ENCODE measurements at regions of chr1 and their contacts with region 1.

Region 1: DNA sequence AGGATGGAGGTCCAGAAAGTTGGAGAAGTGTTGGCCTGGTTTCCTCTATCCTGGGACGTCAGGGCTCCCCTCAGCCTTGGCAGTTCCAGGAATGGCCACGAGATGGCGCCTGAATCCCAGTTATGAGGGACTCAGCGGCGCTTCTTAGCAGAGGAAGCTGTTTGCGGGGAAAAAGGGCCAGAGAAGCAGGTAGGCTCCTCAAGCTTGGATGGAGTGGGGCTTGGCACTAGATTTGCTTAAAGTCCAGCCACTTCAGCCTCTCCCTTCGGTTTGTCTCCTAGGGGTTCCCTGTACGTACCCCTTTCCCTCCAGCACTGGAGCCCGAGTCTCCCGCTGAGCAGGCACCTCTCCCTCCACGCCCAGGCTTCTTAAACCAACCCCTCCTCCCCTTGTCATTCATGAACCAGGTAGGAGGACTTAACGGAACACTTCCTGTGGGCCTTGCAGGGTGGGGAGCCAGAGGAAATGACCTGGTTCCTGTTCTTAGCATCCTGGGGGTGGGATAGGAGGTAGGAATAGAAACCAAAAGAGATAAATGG is 32.0 kb upstream of the TENT5B start:
- DNase-seq: peak; percentile 66 to 76
- ATAC-seq: peak; percentile 88 to 94
- H3K4me3 ChIP-seq: no peak overlapping the region
- H3K27ac ChIP-seq: peak overlapping the region in 1 of 2 experiments; percentile 29; a peak in 3 of 6 replicates
- H3K4me1 ChIP-seq: 0 out of 3 replicates have a peak, but pooled peaks cover 4% of the 10 kb centered on the region
- CTCF ChIP-seq: peak; percentile 80
- EP300 ChIP-seq: no peak
- POLR2A ChIP-seq: no peak
- RAD21 ChIP-seq: peak; percentile 90 to 92

Region 2: DNA sequence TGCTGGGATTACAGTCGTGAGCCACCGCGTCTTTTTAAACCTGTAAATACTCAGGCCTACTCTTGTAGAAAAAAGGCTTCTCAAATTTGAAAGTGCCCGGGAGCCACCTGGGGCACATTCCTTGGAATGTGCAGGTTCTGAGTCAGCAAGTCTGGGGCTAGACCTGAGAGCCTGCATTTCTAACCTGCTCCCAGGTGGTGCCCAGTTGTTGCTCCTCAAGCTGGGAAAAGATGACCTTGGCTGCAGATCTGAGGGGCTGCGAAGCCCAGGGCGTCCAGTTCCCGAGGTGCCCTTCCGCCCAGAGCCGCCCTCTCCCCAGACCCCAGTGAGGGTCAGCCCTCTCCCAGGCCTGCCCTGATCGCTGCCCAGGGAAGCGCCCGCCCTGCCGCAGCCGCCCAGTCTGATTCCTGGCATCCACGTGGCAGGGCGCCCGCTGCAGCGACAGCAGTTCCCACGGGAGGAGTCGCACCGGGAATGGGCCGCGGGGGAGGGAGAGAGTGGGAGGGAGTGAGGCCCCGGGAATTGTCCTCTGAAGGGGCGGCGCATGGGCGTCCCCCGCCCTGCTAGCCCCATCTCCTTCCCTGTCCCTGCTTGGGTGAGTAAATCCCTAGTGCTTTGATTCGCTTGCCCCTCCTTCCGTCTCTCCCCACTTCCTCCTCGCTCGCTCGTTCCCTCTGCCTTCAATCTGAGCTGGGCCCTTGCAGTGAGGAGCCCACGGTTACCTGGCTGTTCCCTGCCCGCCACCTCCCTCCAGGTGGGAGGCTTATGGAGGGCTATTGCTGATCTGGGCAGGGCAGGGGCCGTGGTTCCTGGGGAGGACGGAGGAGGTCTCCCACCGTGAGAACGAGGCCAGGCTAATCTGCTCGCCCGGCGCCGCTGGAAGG is 13.2 kb before region 1 on chr1:
- CTCF ChIA-PET with region 1: interaction called, 64 read pairs
- POLR2A ChIA-PET with region 1: no interaction called
- DNase-seq: no peak
- ATAC-seq: no peak
- H3K4me3 ChIP-seq: no peak overlapping the region
- H3K27ac ChIP-seq: 0 out of 6 replicates have a peak overlapping the region, but pooled peaks of 1 of the 2 experiments have one; percentile 18
- H3K4me1 ChIP-seq: no peaks in the 10 kb centered on the region
- CTCF ChIP-seq: no peak
- EP300 ChIP-seq: no peak
- POLR2A ChIP-seq: no peak
- RAD21 ChIP-seq: no peak

Region 3: DNA sequence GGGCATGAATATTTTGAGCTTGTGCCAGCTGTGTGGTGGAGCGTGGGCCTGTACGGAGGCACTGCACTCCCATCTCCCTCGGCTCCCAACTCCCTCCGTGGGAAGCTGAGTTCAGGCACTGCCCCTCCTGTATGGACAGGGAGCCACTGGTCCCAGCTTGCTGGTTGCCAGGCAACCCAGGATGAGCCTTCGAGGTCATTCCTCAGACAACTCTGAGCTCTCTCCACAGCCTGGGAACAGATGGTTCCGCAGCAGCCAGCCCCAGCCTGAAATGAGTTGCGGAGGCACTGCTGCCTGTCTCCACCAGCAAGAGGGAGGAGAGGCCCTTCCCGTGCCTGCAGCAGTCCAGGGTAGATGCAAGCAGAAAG is 26.4 kb after region 1 on chr1:
- CTCF ChIA-PET with region 1: interaction called, 80 read pairs
- POLR2A ChIA-PET with region 1: no interaction called
- DNase-seq: no peak
- ATAC-seq: peak; percentile 31 to 39; a peak in 3 of 6 replicates
- H3K4me3 ChIP-seq: no peak overlapping the region
- H3K27ac ChIP-seq: no peak overlapping the region
- H3K4me1 ChIP-seq: peaks cover 12% of the 10 kb centered on the region
- CTCF ChIP-seq: no peak
- EP300 ChIP-seq: no peak
- POLR2A ChIP-seq: no peak
- RAD21 ChIP-seq: no peak

Region 4: DNA sequence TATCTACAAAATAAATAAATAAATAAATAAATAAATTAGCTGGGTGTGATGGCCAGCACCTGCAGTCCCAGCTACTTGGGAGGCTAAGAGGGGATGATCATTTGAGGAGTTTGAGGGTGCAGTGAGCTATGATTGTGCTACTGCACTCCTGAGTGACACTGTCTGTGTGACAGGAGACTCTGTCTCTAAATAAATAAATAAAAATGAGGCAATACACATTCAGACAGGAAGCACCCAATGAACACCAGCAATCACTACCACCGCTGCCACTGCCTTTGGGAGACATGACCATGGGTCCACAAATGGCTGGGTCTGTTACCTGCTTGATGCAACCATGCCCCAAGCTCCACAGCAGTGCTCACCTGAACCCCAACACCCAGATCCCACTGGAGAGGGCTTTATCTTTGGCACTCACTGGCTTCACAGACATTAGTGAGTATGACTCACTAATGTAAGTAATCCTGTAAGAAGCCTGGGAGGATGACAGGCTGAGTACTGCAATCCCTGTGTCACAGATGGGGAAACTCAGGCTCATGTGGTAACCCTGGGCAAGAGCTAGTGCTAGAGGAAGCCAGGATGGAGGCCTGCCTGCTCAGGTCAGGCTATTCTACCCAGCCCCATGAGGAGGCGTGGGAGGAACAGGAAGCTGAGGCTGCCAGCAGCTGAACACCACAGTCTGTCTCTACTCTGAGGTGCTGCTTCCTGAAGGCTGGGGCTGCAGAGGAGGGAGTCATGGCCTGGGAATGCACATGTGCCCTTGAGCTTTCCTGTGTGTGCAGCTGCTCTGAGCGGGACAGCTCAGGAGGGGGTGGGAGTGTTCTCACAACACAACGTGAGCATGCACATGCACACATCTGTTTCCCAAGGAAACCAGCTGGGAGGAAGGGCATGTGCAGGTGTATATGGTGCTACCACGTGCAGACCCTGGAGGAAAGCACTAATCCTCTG is 67.2 kb after region 1 on chr1:
- CTCF ChIA-PET with region 1: interaction called, 12 read pairs
- POLR2A ChIA-PET with region 1: no interaction called
- DNase-seq: peak; percentile 65 to 81
- ATAC-seq: peak; percentile 94 to 96
- H3K4me3 ChIP-seq: no peak overlapping the region
- H3K27ac ChIP-seq: peak overlapping the region; percentile 67 to 83
- H3K4me1 ChIP-seq: peaks cover 30% of the 10 kb centered on the region
- CTCF ChIP-seq: no peak
- EP300 ChIP-seq: no peak
- POLR2A ChIP-seq: no peak
- RAD21 ChIP-seq: peak; percentile 46 to 48; a peak in 3 of 5 replicates

Region 5: GRCh38 chr1:27292106-27292505 is 247.4 kb after region 1 on chr1:
- CTCF ChIA-PET with region 1: interaction called, 26 read pairs
- POLR2A ChIA-PET with region 1: no interaction called
- DNase-seq: no peak
- ATAC-seq: no peak
- H3K4me3 ChIP-seq: no peak overlapping the region
- H3K27ac ChIP-seq: no peak overlapping the region
- H3K4me1 ChIP-seq: no peaks in the 10 kb centered on the region
- CTCF ChIP-seq: no peak
- EP300 ChIP-seq: no peak
- POLR2A ChIP-seq: no peak
- RAD21 ChIP-seq: no peak